HepG2 (cell line): ENCODE measurements at regions of chr10 and their contacts with region 1.

Region 1: GRCh38 chr10:79445141-79445976 is at the start of gene ZCCHC24:
- DNase-seq: peak; percentile 96
- ATAC-seq: peak; percentile 95
- H3K4me3 ChIP-seq: peak within 1 kb of the TSS; percentile 69 to 77 (median 76)
- H3K27ac ChIP-seq: no peak within 1 kb of the TSS
- H3K4me1 ChIP-seq: peaks cover 54% of the 10 kb centered on the region
- H3K27me3 ChIP-seq: peaks cover 2 to 21% of the 10 kb centered on the region in 2 experiments; a peak in 4 of 5 replicates
- CTCF ChIP-seq: no peak
- EP300 ChIP-seq: no peak
- POLR2A ChIP-seq: peak; percentile 26 to 65; a peak in 2 of 4 replicates
- RAD21 ChIP-seq: no peak
- total RNA-seq, gene ZCCHC24: 3.1 and 3.9 TPM in 2 replicates

Region 2: GRCh38 chr10:79424221-79425073 is 20.9 kb before region 1 on chr10:
- CTCF ChIA-PET with region 1: no interaction called
- POLR2A ChIA-PET with region 1: interaction called, 18 read pairs
- in situ Hi-C with region 1: no loop called
- intact Hi-C with region 1: loop called (anchors 1 kb)
- DNase-seq: peak; percentile 91
- ATAC-seq: peak; percentile 98
- H3K4me3 ChIP-seq: peak overlapping the region in 2 of 3 experiments; percentile 14 to 46; a peak in 3 of 6 replicates
- H3K27ac ChIP-seq: peak overlapping the region; percentile 65
- H3K4me1 ChIP-seq: peaks cover 35% of the 10 kb centered on the region
- H3K27me3 ChIP-seq: no peaks in the 10 kb centered on the region
- CTCF ChIP-seq: 0 out of 2 replicates have a peak, but pooled peaks have one; percentile 14
- EP300 ChIP-seq: peak in 1 of 2 experiments; percentile 56; a peak in 1 of 4 replicates
- POLR2A ChIP-seq: no peak
- RAD21 ChIP-seq: no peak

Region 3: GRCh38 chr10:79431891-79432831 is 13.2 kb before region 1 on chr10:
- CTCF ChIA-PET with region 1: no interaction called
- POLR2A ChIA-PET with region 1: interaction called, 10 read pairs
- in situ Hi-C with region 1: no loop called
- intact Hi-C with region 1: no loop called
- DNase-seq: no peak
- ATAC-seq: no peak
- H3K4me3 ChIP-seq: no peak overlapping the region
- H3K27ac ChIP-seq: no peak overlapping the region
- H3K4me1 ChIP-seq: peaks cover 45% of the 10 kb centered on the region
- H3K27me3 ChIP-seq: no peaks in the 10 kb centered on the region
- CTCF ChIP-seq: no peak
- EP300 ChIP-seq: no peak
- POLR2A ChIP-seq: no peak
- RAD21 ChIP-seq: no peak

Region 4: GRCh38 chr10:79938728-79939406 is 493.5 kb after region 1 on chr10:
- CTCF ChIA-PET with region 1: no interaction called
- POLR2A ChIA-PET with region 1: no interaction called
- in situ Hi-C with region 1: no loop called
- intact Hi-C with region 1: no loop called
- DNase-seq: no peak
- ATAC-seq: no peak
- H3K4me3 ChIP-seq: no peak overlapping the region
- H3K27ac ChIP-seq: no peak overlapping the region
- H3K4me1 ChIP-seq: peaks cover 11% of the 10 kb centered on the region
- H3K27me3 ChIP-seq: peaks cover 2 to 38% of the 10 kb centered on the region in 2 experiments; a peak in 3 of 5 replicates
- CTCF ChIP-seq: no peak
- EP300 ChIP-seq: no peak
- POLR2A ChIP-seq: no peak
- RAD21 ChIP-seq: no peak